MCF 10A (cell line): ENCODE measurements at regions of chr1 and their contacts with region 1.

Region 1: GRCh38 chr1:33472349-33472980 is at the start of gene ZSCAN20:
- DNase-seq: peak; percentile 98
- H3K4me3 Mint-ChIP-seq: peak within 1 kb of the TSS; percentile 87
- H3K27ac Mint-ChIP-seq: peak within 1 kb of the TSS; percentile 98
- H3K4me1 Mint-ChIP-seq: peaks cover 24% of the 10 kb centered on the region
- H3K27me3 Mint-ChIP-seq: no peaks in the 10 kb centered on the region
- CTCF ChIP-seq: no peak
- total RNA-seq, gene ZSCAN20: 5.1 and 8.2 TPM in 2 replicates

Region 2: DNA sequence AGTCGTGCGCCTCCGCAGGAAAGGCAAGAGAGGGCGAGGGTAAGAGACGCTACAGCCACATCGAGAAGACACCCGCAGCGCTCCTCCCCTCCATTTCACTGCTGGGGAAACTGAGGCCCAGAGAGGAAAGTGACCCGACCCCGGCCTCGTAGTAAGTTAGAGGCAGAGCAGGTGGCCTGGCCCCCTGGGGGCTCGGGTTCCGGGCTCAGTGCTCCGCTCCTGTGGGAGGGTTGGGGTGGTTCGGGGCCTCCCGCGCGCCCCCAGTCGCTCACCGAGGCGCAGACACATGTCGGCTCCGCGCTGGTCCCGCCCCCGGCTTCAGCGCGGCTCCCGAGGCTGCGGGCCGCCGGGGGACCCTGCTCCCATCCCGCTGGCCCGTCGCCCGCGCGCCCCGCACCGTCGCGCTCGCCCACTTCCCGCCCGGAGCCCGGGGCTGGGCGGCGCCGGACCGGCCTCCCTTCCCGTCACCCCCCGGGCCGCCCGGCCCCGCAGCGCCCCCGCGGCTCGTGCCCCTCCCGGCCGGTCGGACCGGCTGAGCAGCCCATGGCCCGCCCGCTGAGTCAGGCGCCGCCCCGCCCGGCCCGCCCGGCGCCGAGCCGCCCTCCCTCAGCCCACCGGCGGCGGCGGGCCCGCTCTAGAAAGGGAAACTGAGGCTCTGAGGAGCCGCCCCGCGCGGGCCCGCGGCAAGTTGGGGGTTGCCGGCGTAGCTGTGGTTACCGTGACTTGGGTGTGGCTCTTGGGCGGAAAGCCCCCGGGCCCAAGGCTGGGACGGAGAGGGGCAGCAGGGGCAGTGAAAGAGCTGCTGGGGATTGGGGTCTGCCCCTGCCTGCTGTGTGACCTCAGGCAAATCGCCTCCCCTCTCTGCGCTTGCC is 571.3 kb before region 1 on chr1 and contains the start of gene TMEM54:
- CTCF ChIA-PET with region 1: no interaction called
- POLR2A ChIA-PET with region 1: no interaction called
- intact Hi-C with region 1: no loop called
- DNase-seq: no peak
- H3K4me3 Mint-ChIP-seq: peak within 1 kb of the TSS; percentile 68
- H3K27ac Mint-ChIP-seq: peak within 1 kb of the TSS; percentile 66
- H3K4me1 Mint-ChIP-seq: no peaks in the 10 kb centered on the region
- H3K27me3 Mint-ChIP-seq: no peaks in the 10 kb centered on the region
- CTCF ChIP-seq: no peak
- total RNA-seq, gene TMEM54: 6.2 and 12.1 TPM in 2 replicates

Region 3: GRCh38 chr1:33094971-33095604 is 377.4 kb before region 1 on chr1:
- CTCF ChIA-PET with region 1: interaction called, 27 read pairs
- POLR2A ChIA-PET with region 1: no interaction called
- intact Hi-C with region 1: loop called (anchors 1 kb)
- DNase-seq: peak; percentile 70
- H3K4me3 Mint-ChIP-seq: no peak overlapping the region
- H3K27ac Mint-ChIP-seq: no peak overlapping the region
- H3K4me1 Mint-ChIP-seq: peaks cover 18% of the 10 kb centered on the region
- H3K27me3 Mint-ChIP-seq: no peaks in the 10 kb centered on the region
- CTCF ChIP-seq: peak; percentile 91

Region 4: DNA sequence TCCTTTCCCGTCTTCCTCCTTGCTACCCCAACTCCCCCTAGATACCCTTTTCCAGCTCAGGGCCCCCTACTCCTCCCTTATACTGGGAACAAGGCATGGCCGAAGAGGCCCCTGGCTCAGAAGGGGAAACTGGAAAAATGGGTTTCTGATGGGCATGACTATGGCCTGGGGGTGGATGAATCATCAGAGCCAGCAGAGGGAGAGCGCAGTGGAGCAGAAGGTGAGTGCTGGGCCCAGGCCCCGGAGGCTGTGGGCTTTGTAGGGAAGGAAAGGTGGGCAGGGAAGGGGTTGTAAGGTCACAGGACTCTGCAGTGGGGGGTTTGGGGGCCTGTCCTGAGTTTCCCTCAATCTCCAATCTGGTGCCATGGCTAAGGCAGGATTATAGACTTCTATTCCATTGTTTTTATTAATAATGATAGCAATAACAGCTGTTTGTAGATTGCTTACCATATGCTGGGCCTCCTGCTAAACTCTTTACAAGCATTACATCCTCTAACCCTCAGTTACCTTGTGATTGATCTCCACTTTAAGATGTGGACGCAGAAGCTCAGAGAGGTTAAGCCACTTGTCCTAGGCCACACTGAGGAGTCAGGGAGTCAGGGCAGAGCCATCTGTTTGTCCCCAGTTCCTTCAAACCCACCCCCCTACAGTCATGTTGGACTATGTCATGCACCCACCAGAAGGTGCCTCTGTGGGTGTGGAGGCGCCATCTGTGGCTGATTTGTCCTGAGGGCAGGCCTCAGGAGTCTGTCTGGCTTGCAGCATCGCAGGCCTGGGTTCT is 252.4 kb before region 1 on chr1:
- CTCF ChIA-PET with region 1: interaction called, 21 read pairs
- POLR2A ChIA-PET with region 1: interaction called, 8 read pairs
- intact Hi-C with region 1: loop called (anchors 1 kb)
- DNase-seq: peak; percentile 84
- H3K4me3 Mint-ChIP-seq: no peak overlapping the region
- H3K27ac Mint-ChIP-seq: peak overlapping the region; percentile 95
- H3K4me1 Mint-ChIP-seq: peaks cover 40% of the 10 kb centered on the region
- H3K27me3 Mint-ChIP-seq: no peaks in the 10 kb centered on the region
- CTCF ChIP-seq: no peak

Region 5: DNA sequence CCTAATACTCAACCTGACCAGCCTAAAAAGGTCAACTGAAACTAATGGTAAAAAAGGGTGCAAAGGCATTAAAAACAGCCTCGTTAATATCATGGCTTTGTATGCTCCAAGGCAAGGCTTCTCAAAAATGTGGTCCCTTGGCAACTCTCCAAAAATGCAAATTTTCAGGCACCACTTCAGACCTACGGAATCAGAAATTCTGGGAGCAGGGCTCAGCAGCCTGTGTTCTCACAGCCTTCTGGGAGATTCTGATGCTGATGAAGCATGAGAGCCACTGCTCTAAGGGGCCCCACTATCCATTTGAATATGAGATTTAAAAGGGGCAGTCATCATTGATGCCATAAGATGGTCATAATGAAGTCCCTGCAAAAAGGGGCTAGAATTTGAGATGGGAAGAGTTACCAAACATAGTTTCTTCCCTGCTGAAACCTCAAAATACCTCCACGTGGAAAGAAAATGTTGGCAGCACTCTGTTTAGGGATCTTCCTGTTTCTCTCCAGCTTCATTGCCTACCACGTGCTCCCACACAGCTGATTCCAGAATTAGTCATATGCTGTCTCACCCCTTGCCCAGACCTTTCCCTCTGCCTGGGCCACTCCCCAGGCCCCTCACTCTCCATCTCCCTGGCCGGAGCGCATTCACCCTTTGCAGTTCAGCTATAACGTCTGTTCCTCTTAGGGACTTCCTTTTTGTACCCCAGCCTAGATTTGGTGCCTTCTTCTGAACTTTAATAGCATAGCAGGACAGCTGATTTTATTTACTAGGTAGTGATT is 88.2 kb before region 1 on chr1:
- CTCF ChIA-PET with region 1: interaction called, 7 read pairs
- POLR2A ChIA-PET with region 1: interaction called, 5 read pairs
- intact Hi-C with region 1: loop called (anchors 5 kb)
- DNase-seq: peak; percentile 57
- H3K4me3 Mint-ChIP-seq: no peak overlapping the region
- H3K27ac Mint-ChIP-seq: peak overlapping the region; percentile 61
- H3K4me1 Mint-ChIP-seq: peaks cover 42% of the 10 kb centered on the region
- H3K27me3 Mint-ChIP-seq: no peaks in the 10 kb centered on the region
- CTCF ChIP-seq: no peak

Region 6: DNA sequence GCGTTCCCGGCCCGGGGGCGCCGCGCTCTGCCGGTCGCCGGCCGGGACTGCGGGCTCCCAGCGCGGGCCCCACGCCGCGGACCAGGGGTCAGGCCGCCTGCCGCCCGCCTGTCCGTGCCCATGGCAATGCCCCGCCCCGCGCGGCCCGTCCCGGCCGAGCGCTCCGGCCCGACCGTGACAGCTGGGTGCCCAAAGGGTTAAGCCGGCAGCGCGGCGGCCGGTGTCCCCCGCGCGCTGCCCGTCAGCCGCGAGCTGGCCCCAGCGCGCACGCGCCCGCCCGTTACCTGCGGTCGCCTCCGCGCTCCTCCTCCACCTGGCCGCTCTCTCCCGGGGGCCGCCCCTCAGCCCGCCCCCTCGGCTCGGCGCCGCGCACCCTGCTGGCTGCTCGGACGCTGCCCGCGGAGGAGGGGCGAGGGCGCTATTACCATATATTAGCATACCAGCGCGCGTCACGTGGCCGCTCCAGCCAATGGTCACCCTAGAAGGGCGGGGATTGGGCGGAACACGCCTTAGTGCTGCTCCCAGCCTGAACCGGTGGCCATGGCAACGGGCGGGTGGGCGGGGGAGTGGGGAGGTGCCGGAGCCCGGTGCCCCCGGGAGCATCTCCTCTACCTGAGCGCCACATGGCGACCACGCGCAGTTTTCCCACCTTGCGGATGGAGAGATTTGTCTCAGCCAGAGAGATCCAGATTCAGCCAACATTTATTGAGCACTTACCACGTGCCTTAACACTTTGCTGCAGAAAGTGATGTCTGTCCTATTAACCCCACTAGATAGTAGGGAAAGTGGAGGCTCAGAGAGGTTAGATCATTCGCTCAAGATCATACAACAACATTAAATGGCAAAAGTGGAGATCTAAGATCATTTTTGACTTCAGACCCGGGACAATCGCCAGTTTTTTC is 41.5 kb before region 1 on chr1 and contains the start of gene PHC2:
- CTCF ChIA-PET with region 1: interaction called, 16 read pairs
- POLR2A ChIA-PET with region 1: interaction called, 3 read pairs
- intact Hi-C with region 1: no loop called
- DNase-seq: peak; percentile 97
- H3K4me3 Mint-ChIP-seq: no peak within 1 kb of the TSS
- H3K27ac Mint-ChIP-seq: no peak within 1 kb of the TSS
- H3K4me1 Mint-ChIP-seq: peaks cover 21% of the 10 kb centered on the region
- H3K27me3 Mint-ChIP-seq: no peaks in the 10 kb centered on the region
- CTCF ChIP-seq: no peak
- total RNA-seq, gene PHC2: 117 and 137 TPM in 2 replicates

Region 7: GRCh38 chr1:33616773-33617172 is 144.3 kb after region 1 on chr1:
- CTCF ChIA-PET with region 1: interaction called, 15 read pairs
- POLR2A ChIA-PET with region 1: no interaction called
- intact Hi-C with region 1: loop called (anchors 2 kb)
- DNase-seq: no peak
- H3K4me3 Mint-ChIP-seq: no peak overlapping the region
- H3K27ac Mint-ChIP-seq: no peak overlapping the region
- H3K4me1 Mint-ChIP-seq: peaks cover 4% of the 10 kb centered on the region
- H3K27me3 Mint-ChIP-seq: peaks cover 85% of the 10 kb centered on the region
- CTCF ChIP-seq: no peak